ENCODE measurements at regions of chr7 and their contacts with region 1.

Region 1: GRCh38 chr7:51224811-51225612 is 91.6 kb downstream of the COBL start:
- DNase-seq: peak; percentile 85
- H3K4me3 ChIP-seq: no peak overlapping the region
- H3K27ac ChIP-seq: peak overlapping the region in 3 of 4 donors; percentile 3 to 28 (median 18)
- H3K4me1 ChIP-seq: peaks cover 0 to 13% (median 7%) of the 10 kb centered on the region in 4 donors
- H3K27me3 ChIP-seq: no peaks in the 10 kb centered on the region
- CTCF ChIP-seq: peak; percentile 38 to 83 (median 60)
- EP300 ChIP-seq: no peak
- POLR2A ChIP-seq: no peak

Region 2: GRCh38 chr7:50826371-50827172 is 398.4 kb before region 1 on chr7:
- in situ Hi-C with region 1: no loop called
- intact Hi-C with region 1: no loop called
- DNase-seq: no peak
- H3K4me3 ChIP-seq: no peak overlapping the region
- H3K27ac ChIP-seq: no peak overlapping the region
- H3K4me1 ChIP-seq: no peaks in the 10 kb centered on the region
- H3K27me3 ChIP-seq: peaks cover under 1% of the 10 kb centered on the region
- CTCF ChIP-seq: no peak
- EP300 ChIP-seq: no peak
- POLR2A ChIP-seq: no peak

Region 3: DNA sequence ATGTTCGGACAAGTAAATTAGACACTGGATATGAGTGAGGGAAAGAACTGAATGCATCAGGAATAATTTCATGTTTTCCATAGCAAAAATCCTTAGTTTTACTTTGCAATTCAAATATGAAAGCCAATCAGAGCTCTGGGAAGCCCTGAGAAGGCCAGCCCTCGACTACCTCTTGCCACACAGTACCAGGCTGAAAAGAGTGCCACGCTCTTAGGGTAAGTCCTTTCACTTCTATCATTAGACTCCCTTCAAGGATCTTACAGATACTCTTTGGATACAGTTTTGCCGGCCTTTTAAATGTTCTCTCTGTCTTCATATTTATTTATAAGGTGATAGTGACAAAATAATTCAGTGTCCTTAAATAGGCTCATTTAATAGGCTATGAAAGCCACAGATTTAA is 89.7 kb after region 1 on chr7:
- in situ Hi-C with region 1: no loop called
- intact Hi-C with region 1: no loop called
- DNase-seq: no peak
- H3K4me3 ChIP-seq: peak overlapping the region in 1 of 4 donors; percentile 64
- H3K27ac ChIP-seq: peak overlapping the region in 3 of 4 donors; percentile 9 to 85 (median 79)
- H3K4me1 ChIP-seq: peaks cover 0 to 42% (median 23%) of the 10 kb centered on the region in 4 donors
- H3K27me3 ChIP-seq: peaks cover 18% of the 10 kb centered on the region
- CTCF ChIP-seq: no peak
- EP300 ChIP-seq: no peak
- POLR2A ChIP-seq: no peak

Region 4: DNA sequence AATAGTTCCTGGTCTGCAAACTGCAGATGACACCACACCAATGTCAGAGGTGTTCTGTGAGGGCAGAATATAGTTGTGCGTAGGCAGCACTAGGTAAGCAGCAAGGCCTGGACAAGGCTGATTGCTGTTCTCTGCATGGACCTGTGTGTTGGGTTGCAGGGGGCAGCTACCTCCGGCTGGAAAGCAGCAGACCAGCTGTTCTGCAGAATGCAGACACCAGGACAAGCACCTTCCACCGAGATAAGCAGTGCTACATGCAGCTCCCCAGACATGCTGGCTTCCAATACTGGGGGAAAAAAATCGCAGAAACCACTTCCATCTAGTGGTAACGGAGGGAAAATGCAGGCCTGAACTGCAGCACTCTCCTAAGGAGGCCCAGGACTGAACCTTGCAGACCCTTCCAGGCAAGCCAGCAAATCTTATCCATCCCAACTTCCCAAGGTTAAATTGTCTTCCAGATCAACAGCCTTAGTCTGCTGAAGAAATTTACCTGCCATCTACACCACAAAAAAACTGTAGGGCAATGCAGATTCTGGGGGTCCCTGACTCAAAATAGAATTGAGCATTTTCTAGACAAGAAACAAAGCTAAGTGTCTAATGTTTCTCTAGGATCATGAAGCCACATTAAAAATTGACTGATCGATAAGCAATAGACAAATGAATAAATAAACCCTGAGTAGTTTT is 142.1 kb after region 1 on chr7:
- in situ Hi-C with region 1: loop called in 2 of 4 experiments (anchors 10 to 25 kb)
- intact Hi-C with region 1: no loop called
- DNase-seq: peak; percentile 34
- H3K4me3 ChIP-seq: no peak overlapping the region
- H3K27ac ChIP-seq: no peak overlapping the region
- H3K4me1 ChIP-seq: no peaks in the 10 kb centered on the region
- H3K27me3 ChIP-seq: no peaks in the 10 kb centered on the region
- CTCF ChIP-seq: peak; percentile 62 to 87 (median 74)
- EP300 ChIP-seq: no peak
- POLR2A ChIP-seq: no peak